MCF 10A (cell line): ENCODE measurements at regions of chr15 and their contacts with region 1.

Region 1: GRCh38 chr15:78299101-78299930 is at the start of gene SKIC8:
- DNase-seq: peak; percentile 95
- H3K4me3 Mint-ChIP-seq: peak within 1 kb of the TSS; percentile 99
- H3K27ac Mint-ChIP-seq: peak within 1 kb of the TSS; percentile 99
- H3K4me1 Mint-ChIP-seq: peaks cover 6% of the 10 kb centered on the region
- H3K27me3 Mint-ChIP-seq: no peaks in the 10 kb centered on the region
- CTCF ChIP-seq: no peak
- total RNA-seq, gene SKIC8: 54.3 and 56.2 TPM in 2 replicates

Region 2: DNA sequence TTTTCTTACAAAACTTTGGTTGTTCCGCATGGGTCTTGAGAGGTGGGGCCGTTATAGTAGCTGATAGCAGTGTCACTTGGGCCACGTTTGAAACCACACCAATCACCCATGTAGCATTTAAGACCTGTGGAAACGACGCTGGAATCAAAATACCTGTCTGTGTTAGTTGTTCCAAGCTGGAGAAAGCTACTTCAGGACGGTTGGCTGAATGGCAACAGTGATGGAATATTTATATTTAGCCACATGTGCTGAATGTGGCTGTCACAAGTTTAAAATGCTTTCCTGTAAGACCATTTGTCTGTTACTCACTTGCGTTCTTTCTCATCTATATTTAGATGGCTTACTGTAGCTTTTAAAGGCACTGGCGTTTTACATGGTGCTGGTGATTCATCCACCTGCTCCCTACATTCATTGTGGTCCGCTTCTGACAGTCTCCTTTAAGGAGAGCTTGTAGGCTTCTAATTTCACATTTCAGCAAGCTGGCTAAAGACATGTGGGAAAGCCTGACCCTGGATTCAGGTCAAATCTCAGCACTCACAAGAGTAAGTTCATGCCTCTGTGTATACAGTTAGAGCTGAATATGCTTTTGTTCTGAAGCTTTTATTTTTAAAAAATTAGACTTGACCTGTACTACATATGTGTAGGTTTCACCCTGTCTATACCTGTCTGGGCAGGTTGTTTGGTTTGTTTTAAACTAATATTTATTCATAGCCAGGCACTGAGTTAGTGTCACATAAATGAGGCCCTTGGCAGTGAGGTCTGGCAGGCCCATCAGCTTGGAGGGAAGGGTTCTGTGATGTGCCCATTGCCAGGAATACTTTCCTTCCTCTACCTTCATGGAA is 33.3 kb before region 1 on chr15:
- CTCF ChIA-PET with region 1: no interaction called
- POLR2A ChIA-PET with region 1: interaction called, 13 read pairs
- intact Hi-C with region 1: no loop called
- DNase-seq: peak; percentile 55
- H3K4me3 Mint-ChIP-seq: no peak overlapping the region
- H3K27ac Mint-ChIP-seq: peak overlapping the region; percentile 68
- H3K4me1 Mint-ChIP-seq: peaks cover 4% of the 10 kb centered on the region
- H3K27me3 Mint-ChIP-seq: peaks cover 6% of the 10 kb centered on the region
- CTCF ChIP-seq: no peak

Region 3: GRCh38 chr15:78284758-78285157 is 14.6 kb before region 1 on chr15:
- CTCF ChIA-PET with region 1: interaction called, 4 read pairs
- POLR2A ChIA-PET with region 1: interaction called, 18 read pairs
- intact Hi-C with region 1: no loop called
- DNase-seq: no peak
- H3K4me3 Mint-ChIP-seq: no peak overlapping the region
- H3K27ac Mint-ChIP-seq: no peak overlapping the region
- H3K4me1 Mint-ChIP-seq: no peaks in the 10 kb centered on the region
- H3K27me3 Mint-ChIP-seq: no peaks in the 10 kb centered on the region
- CTCF ChIP-seq: peak; percentile 11

Region 4: GRCh38 chr15:78767331-78767951 is 468.1 kb after region 1 on chr15:
- CTCF ChIA-PET with region 1: no interaction called
- POLR2A ChIA-PET with region 1: no interaction called
- intact Hi-C with region 1: no loop called
- DNase-seq: no peak
- H3K4me3 Mint-ChIP-seq: no peak overlapping the region
- H3K27ac Mint-ChIP-seq: no peak overlapping the region
- H3K4me1 Mint-ChIP-seq: peaks cover 11% of the 10 kb centered on the region
- H3K27me3 Mint-ChIP-seq: no peaks in the 10 kb centered on the region
- CTCF ChIP-seq: no peak